B cell (primary cell): ENCODE measurements at regions of chr15 and their contacts with region 1.

Region 1: GRCh38 chr15:90201130-90201949 is at the start of gene SEMA4B:
- DNase-seq: peak; percentile 84
- ATAC-seq: peak; percentile 89
- H3K4me3 ChIP-seq: peak within 1 kb of the TSS; percentile 79 to 94 (median 86)
- H3K4me3 Mint-ChIP-seq: peak within 1 kb of the TSS; percentile 93
- H3K27ac ChIP-seq: peak within 1 kb of the TSS; percentile 52 to 72
- H3K27ac Mint-ChIP-seq: peak within 1 kb of the TSS; percentile 95
- H3K4me1 ChIP-seq: peaks cover 64 to 78% of the 10 kb centered on the region in 2 donors
- H3K4me1 Mint-ChIP-seq: peaks cover 73% of the 10 kb centered on the region
- H3K27me3 ChIP-seq: no peaks in the 10 kb centered on the region
- H3K27me3 Mint-ChIP-seq: no peaks in the 10 kb centered on the region
- CTCF ChIP-seq: no peak
- total RNA-seq, gene SEMA4B: 334 and 336 TPM in 2 replicates

Region 2: DNA sequence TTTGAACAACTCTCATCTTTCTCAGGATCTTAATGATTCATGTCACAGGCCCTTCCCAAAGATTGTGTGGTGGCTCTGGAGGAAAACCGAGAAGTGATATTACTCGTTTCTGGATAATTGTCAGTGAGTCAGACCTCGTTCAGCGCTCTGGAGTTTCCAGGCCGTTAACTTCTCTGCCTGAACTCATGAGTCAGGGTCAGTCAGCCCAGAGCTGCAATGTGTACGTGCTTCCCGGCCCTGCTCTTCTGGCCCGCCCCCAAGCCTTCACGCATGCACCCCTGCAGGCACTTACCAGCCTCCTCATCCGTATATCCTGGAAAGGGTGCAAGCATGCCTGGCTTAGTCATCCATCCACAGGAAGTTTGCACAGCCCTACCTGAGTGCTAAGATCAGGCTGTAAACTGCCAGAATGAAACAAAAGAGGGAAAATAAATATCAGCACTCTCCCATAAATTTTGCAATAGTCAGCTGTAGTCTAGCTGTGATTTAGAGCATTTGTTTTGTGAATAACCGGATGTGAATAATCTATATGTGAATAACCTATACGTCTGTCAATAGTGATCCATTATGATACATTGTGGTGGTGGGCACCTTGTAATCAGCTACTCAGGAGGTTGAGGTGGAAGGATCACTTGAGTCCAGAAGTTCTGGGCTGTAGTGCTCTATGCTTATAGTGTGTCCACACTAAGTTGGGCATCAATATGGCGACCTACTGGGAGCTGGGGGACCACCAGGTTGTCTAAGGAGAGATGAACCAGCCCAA is 35.5 kb before region 1 on chr15:
- CTCF ChIA-PET with region 1: interaction called, 37 read pairs
- POLR2A ChIA-PET with region 1: interaction called, 19 read pairs
- intact Hi-C with region 1: no loop called
- DNase-seq: no peak
- ATAC-seq: peak; percentile 53
- H3K4me3 ChIP-seq: no peak overlapping the region
- H3K4me3 Mint-ChIP-seq: peak overlapping the region; percentile 30
- H3K27ac ChIP-seq: no peak overlapping the region
- H3K27ac Mint-ChIP-seq: peak overlapping the region; percentile 59
- H3K4me1 ChIP-seq: peaks cover 22 to 40% of the 10 kb centered on the region in 2 donors
- H3K4me1 Mint-ChIP-seq: peaks cover 56% of the 10 kb centered on the region
- H3K27me3 ChIP-seq: no peaks in the 10 kb centered on the region
- H3K27me3 Mint-ChIP-seq: no peaks in the 10 kb centered on the region
- CTCF ChIP-seq: no peak

Region 3: DNA sequence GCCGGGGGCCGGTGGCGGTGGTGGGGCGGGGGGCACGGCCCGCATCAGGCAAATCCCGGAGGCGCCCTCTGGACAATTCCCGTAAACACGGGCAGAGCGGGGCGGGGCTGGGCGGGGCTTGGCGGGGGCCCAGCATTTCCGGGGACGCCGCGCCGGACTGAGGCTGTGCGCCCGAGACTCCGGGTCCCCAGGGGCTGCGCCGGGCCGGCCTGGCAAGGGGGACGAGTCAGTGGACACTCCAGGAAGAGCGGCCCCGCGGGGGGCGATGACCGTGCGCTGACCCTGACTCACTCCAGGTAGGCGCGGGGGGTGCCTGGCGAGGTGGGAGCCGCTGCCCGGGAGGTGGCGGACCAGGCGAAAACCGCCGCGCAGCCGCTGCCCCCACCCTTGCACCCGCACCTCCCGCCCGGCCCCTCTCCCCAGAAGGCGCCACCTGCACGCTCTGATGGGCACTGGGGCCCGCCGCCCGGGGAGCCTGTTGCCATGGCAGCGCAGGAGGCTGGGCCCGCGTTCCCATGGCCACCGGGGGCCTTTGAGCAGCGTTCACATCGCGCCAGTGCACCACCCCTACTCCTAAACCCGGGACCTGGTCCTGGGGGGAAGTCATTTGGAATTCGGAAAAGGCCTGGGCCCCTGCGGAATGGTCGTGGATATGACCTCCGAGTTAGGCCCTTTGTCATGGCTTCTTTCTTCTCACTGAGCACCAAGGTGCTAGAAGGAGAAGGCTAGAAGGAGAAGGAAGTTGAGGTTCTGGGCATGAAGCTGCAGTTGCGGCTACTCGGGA is 16.4 kb before region 1 on chr15:
- CTCF ChIA-PET with region 1: interaction called, 49 read pairs
- POLR2A ChIA-PET with region 1: interaction called, 150 read pairs
- intact Hi-C with region 1: loop called (anchors 1 kb)
- DNase-seq: peak; percentile 89
- ATAC-seq: peak; percentile 76
- H3K4me3 ChIP-seq: peak overlapping the region; percentile 61 to 79 (median 77)
- H3K4me3 Mint-ChIP-seq: peak overlapping the region; percentile 98
- H3K27ac ChIP-seq: peak overlapping the region; percentile 81 to 88
- H3K27ac Mint-ChIP-seq: peak overlapping the region; percentile 97
- H3K4me1 ChIP-seq: peaks cover 56 to 68% of the 10 kb centered on the region in 2 donors
- H3K4me1 Mint-ChIP-seq: peaks cover 67% of the 10 kb centered on the region
- H3K27me3 ChIP-seq: no peaks in the 10 kb centered on the region
- H3K27me3 Mint-ChIP-seq: no peaks in the 10 kb centered on the region
- CTCF ChIP-seq: no peak